ENCODE measurements at regions of chr17 and their contacts with region 1.

Region 1: DNA sequence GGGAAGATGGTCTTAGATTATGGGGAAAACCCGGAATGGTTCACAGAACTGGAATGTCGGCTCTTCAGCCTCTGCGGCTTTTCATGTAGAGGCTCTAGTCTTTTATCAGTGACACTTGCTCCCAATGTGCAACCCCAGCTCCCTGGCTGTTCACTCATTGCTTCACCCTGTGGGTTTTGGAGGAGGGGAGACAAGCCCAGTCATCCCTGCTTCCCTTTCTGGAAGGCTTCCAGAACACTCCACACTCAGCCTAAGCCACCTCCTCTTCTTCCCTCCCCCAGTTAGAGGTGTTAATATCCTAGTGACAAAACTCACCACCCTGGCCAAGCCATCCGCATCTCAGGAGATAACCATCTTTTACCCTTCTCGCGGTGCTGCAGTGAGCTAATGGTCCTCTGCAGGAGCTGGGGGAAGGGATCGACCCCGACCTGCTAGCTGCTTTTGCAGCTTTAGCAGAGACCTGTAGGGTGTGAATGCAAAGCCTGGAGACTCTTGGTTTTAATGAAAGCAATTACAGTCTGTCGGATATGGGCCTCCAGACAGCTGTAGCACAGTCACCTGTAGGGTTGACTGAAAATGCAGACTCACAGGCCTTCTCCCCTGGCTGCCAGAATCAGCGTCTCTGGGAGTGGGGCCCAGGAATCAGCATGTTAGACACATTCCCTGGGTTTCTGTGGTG is 24.3 kb upstream of the LASP1NB start:
- DNase-seq: peak; percentile 85

Region 2: DNA sequence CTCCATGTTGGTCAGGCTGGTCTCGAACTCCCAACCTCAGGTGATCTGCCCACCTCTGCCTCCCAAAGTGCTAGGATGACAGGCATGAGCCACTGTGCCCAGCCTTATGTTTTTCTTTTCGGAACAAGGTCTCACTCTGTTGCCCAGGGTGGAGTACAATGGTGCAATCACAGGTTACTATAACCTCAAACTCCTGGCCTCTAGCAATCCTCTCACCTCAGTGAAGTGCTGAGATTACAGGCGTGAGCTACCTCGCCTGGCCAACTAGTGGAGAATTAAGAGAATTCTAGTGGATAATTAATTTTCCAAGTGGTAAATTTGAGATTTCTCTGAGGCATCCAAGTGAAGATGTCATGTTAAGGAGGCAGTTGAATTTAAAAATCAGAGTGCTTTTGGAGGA is 69.0 kb after region 1 on chr17:
- intact Hi-C with region 1: loop called in 1 of 2 experiments (anchors 5 kb)
- DNase-seq: peak; percentile 16